IMR-90 (cell line): ENCODE measurements at regions of chr16 and their contacts with region 1.

Region 1: GRCh38 chr16:86609115-86609514 is 30.8 kb downstream of the FOXL1 start:
- DNase-seq: peak; percentile 94
- ATAC-seq: peak; percentile 77
- H3K4me3 ChIP-seq: no peak overlapping the region
- H3K27ac ChIP-seq: peak overlapping the region; percentile 92
- H3K4me1 ChIP-seq: peaks cover 28% of the 10 kb centered on the region
- H3K27me3 ChIP-seq: no peaks in the 10 kb centered on the region
- CTCF ChIP-seq: no peak
- POLR2A ChIP-seq: no peak
- RAD21 ChIP-seq: no peak

Region 2: GRCh38 chr16:86355538-86355937 is 253.6 kb before region 1 on chr16:
- CTCF ChIA-PET with region 1: no interaction called
- POLR2A ChIA-PET with region 1: no interaction called
- dilution Hi-C with region 1: no loop called
- in situ Hi-C with region 1: no loop called
- intact Hi-C with region 1: no loop called
- DNase-seq: peak; percentile 93
- ATAC-seq: peak; percentile 65
- H3K4me3 ChIP-seq: no peak overlapping the region
- H3K27ac ChIP-seq: peak overlapping the region; percentile 99
- H3K4me1 ChIP-seq: peaks cover 22% of the 10 kb centered on the region
- H3K27me3 ChIP-seq: no peaks in the 10 kb centered on the region
- CTCF ChIP-seq: no peak
- POLR2A ChIP-seq: no peak
- RAD21 ChIP-seq: no peak

Region 3: GRCh38 chr16:86517652-86518258 is 91.4 kb before region 1 on chr16:
- CTCF ChIA-PET with region 1: no interaction called
- POLR2A ChIA-PET with region 1: no interaction called
- dilution Hi-C with region 1: no loop called
- in situ Hi-C with region 1: no loop called
- intact Hi-C with region 1: no loop called
- DNase-seq: peak; percentile 88
- ATAC-seq: peak; percentile 47
- H3K4me3 ChIP-seq: no peak overlapping the region
- H3K27ac ChIP-seq: peak overlapping the region; percentile 98
- H3K4me1 ChIP-seq: peaks cover 14% of the 10 kb centered on the region
- H3K27me3 ChIP-seq: no peaks in the 10 kb centered on the region
- CTCF ChIP-seq: peak; percentile 90
- POLR2A ChIP-seq: peak; percentile 78
- RAD21 ChIP-seq: peak; percentile 90

Region 4: DNA sequence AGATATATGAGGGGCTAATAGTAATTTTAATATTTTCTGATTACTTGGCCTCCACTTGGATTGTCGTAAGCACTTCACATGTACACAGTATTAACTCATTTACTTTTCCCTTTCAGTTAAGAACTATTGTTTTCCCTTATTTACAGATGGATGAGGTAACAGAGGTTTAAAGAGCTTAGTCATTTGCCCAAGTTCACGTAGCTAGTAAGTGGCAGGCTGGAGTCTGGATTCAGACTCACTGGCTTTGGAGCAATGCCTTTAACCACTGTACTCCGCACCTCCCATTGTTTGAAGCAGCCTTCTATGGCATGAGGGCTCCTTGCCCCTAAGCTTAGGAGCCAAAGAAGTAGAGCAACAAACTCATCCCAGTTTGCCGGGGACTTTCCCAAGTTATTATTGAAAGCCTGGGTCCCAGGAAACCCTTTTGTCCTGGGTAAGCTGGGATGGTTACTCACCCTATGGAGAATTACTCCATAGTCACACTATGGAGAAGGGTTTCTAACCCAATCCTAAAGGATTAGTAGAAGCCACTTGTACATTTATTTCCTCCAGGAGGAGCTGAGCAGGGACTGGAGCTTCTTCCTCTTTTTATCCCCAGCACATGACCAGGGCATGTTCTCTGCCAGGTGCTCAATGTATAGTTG is 18.5 kb before region 1 on chr16:
- CTCF ChIA-PET with region 1: no interaction called
- POLR2A ChIA-PET with region 1: no interaction called
- dilution Hi-C with region 1: no loop called
- in situ Hi-C with region 1: no loop called
- intact Hi-C with region 1: loop called (anchors 2 kb)
- DNase-seq: peak; percentile 96
- ATAC-seq: peak; percentile 73
- H3K4me3 ChIP-seq: no peak overlapping the region
- H3K27ac ChIP-seq: peak overlapping the region; percentile 11
- H3K4me1 ChIP-seq: peaks cover 33% of the 10 kb centered on the region
- H3K27me3 ChIP-seq: no peaks in the 10 kb centered on the region
- CTCF ChIP-seq: no peak
- POLR2A ChIP-seq: no peak
- RAD21 ChIP-seq: no peak

Region 5: DNA sequence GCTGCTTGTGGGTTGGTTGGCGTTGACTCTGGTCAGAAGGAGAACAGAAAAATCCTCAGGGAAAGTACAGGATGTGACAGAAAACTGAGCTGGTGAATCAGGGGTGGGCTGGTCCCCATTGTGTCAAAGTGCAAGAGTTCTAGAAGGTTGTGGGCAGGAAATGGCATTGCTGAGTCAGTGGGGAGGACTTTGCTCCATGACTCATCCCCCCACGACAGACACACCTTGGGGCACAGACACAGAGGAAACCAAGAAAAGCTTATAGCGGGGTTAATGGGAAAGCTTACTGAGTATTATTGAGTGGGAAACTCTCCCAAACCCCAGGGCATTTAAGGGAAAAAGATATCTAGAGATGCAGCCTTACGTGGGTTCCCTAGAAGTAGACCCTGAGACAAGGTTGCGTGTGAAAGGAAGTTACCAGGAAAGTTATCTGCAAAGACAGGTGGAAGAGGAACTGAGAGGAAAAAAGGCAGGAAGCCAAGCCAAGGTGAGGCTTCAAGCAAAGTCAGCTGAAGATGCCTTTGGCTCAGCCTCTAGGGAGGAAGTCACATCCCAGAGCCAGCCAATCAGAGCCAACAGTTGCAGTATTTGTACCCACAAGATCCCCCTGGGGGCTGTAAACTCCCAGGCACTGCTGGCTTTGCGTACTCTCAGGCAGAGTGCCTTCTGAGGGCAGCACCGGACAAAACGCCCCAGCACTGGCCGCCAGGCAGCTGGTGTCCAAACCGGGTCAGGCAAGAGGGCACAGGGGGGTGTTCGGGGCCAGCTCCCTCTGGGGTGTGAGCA is 55.6 kb after region 1 on chr16:
- CTCF ChIA-PET with region 1: no interaction called
- POLR2A ChIA-PET with region 1: interaction called, 3 read pairs
- dilution Hi-C with region 1: no loop called
- in situ Hi-C with region 1: no loop called
- intact Hi-C with region 1: loop called (anchors 5 kb)
- DNase-seq: peak; percentile 98
- ATAC-seq: peak; percentile 74
- H3K4me3 ChIP-seq: no peak overlapping the region
- H3K27ac ChIP-seq: peak overlapping the region; percentile 77
- H3K4me1 ChIP-seq: peaks cover 29% of the 10 kb centered on the region
- H3K27me3 ChIP-seq: no peaks in the 10 kb centered on the region
- CTCF ChIP-seq: no peak
- POLR2A ChIP-seq: peak; percentile 4; the same call in 1 of the 2 replicates
- RAD21 ChIP-seq: peak; percentile 35; the same call in 1 of the 2 replicates

Region 6: GRCh38 chr16:87924422-87925298 is 1315.5 kb after region 1 on chr16:
- CTCF ChIA-PET with region 1: no interaction called
- POLR2A ChIA-PET with region 1: no interaction called
- dilution Hi-C with region 1: no loop called
- in situ Hi-C with region 1: no loop called
- intact Hi-C with region 1: no loop called
- DNase-seq: no peak
- ATAC-seq: no peak
- H3K4me3 ChIP-seq: no peak overlapping the region
- H3K27ac ChIP-seq: no peak overlapping the region
- H3K4me1 ChIP-seq: no peaks in the 10 kb centered on the region
- H3K27me3 ChIP-seq: peaks cover 47% of the 10 kb centered on the region
- CTCF ChIP-seq: no peak
- POLR2A ChIP-seq: no peak
- RAD21 ChIP-seq: no peak